ENCODE measurements at regions of chr5 and their contacts with region 1.

Region 1: DNA sequence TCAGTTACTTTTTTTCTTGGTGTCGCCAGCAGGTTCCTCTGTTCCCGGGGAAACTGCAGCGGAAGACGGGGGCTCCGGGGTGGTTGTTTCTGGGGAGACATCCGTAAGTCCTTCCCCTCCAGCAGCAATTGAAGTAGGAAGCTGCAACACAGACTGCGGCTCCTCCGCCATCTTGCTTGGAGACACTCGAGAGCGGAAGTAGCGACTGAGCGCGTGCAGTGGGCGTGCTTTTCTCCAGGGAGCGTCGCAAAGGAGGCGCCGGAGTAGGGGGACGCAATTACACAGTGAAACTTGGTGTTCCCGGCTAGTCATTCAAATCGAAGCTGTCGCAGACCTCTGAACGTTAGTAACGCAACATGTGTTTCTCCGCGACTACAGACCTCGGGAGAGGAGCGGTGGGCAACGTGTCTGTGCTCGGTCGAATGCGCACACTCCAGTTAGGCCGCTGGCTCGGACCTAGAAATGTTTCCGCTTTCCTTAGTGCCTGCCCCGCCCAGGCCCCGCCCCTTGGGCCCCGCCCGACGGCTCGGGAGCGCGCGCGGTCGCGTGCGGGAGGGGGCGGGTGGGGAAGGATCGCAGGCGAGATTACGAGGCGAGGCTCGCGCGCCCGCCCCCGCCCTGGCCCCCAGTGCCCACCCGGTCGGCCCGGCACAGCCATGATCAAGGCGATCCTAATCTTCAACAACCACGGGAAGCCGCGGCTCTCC is at the starts of genes AP3S1 and ATG12:
- DNase-seq: peak; percentile 91
- H3K4me3 Mint-ChIP-seq: peak within 1 kb of the TSS; percentile 88
- H3K27ac Mint-ChIP-seq: peak within 1 kb of the TSS; percentile 93
- H3K4me1 Mint-ChIP-seq: peaks cover 54% of the 10 kb centered on the region
- H3K27me3 Mint-ChIP-seq: no peaks in the 10 kb centered on the region
- total RNA-seq, gene AP3S1: 73.5 to 87.0 TPM
- total RNA-seq, gene ATG12: 45.5 to 49.0 TPM

Region 2: GRCh38 chr5:115831163-115831768 is 10.3 kb before region 1 on chr5:
- CTCF ChIA-PET with region 1: interaction called, 11 read pairs
- POLR2A ChIA-PET with region 1: interaction called, 7 read pairs
- DNase-seq: no peak
- H3K4me3 Mint-ChIP-seq: no peak overlapping the region
- H3K27ac Mint-ChIP-seq: no peak overlapping the region
- H3K4me1 Mint-ChIP-seq: peaks cover 3% of the 10 kb centered on the region
- H3K27me3 Mint-ChIP-seq: no peaks in the 10 kb centered on the region